Heart left ventricle (tissue), 16 donors: ENCODE measurements at regions of chr19 and their contacts with region 1.

Region 1: GRCh38 chr19:50357178-50358100 is 8.0 kb downstream of the NAPSA start:
- DNase-seq: peak; percentile 65 to 89 (median 76)
- ATAC-seq: peak; percentile 68 to 86 (median 75)
- H3K4me3 ChIP-seq: peak overlapping the region; percentile 14 to 71 (median 54)
- H3K27ac ChIP-seq: peak overlapping the region; percentile 37 to 92 (median 82)
- H3K4me1 ChIP-seq: peaks cover 0 to 13% (median 0%) of the 10 kb centered on the region in 12 donors
- H3K27me3 ChIP-seq: no peaks in the 10 kb centered on the region
- CTCF ChIP-seq: peak; percentile 82 to 94 (median 88)
- POLR2A ChIP-seq: no peak

Region 2: GRCh38 chr19:50203281-50204080 is 154.0 kb before region 1 on chr19 and contains the start of gene MYH14:
- intact Hi-C with region 1: no loop called
- DNase-seq: peak; percentile 87 to 94 (median 88)
- ATAC-seq: peak; percentile 91 to 93 (median 92)
- H3K4me3 ChIP-seq: peak within 1 kb of the TSS; percentile 24 to 86 (median 62)
- H3K27ac ChIP-seq: peak within 1 kb of the TSS; percentile 56 to 97 (median 84)
- H3K4me1 ChIP-seq: peaks cover 0 to 40% (median 16%) of the 10 kb centered on the region in 12 donors
- H3K27me3 ChIP-seq: peaks cover 0 to 47% (median 28%) of the 10 kb centered on the region in 9 donors
- CTCF ChIP-seq: peak in 2 of 12 donors; percentile 14 to 28
- POLR2A ChIP-seq: peak; percentile 65 to 72
- total RNA-seq, gene MYH14: 65.7 to 120 (median 90.5) TPM

Region 3: DNA sequence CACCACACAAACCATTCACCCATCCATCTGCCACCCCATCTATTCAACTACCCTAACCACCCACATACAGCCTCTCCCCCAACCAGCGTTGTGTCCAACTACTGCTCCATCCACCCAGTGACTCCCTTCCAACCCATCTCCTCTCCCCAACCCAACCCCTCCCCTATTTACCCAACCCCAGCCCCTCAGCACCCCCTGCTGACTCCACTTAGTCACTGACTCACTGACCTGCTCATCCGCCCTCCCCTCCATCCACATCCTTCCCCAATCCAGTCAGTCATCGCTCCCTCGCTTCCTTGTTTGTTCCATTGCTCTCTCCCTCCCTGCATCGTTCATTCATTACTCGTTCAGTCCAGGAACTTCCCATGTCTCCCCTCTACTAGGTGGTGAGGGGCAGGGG is 67.4 kb before region 1 on chr19:
- intact Hi-C with region 1: no loop called
- DNase-seq: no peak
- ATAC-seq: no peak
- H3K4me3 ChIP-seq: no peak overlapping the region
- H3K27ac ChIP-seq: no peak overlapping the region
- H3K4me1 ChIP-seq: no peaks in the 10 kb centered on the region
- H3K27me3 ChIP-seq: no peaks in the 10 kb centered on the region
- CTCF ChIP-seq: no peak
- POLR2A ChIP-seq: no peak

Region 4: GRCh38 chr19:50341091-50341564 is 16.3 kb before region 1 on chr19:
- intact Hi-C with region 1: no loop called
- DNase-seq: no peak
- ATAC-seq: peak in 1 of 4 donors; percentile 47
- H3K4me3 ChIP-seq: no peak overlapping the region
- H3K27ac ChIP-seq: no peak overlapping the region
- H3K4me1 ChIP-seq: peaks cover 0 to 28% (median 0%) of the 10 kb centered on the region in 12 donors
- H3K27me3 ChIP-seq: no peaks in the 10 kb centered on the region
- CTCF ChIP-seq: no peak
- POLR2A ChIP-seq: no peak

Region 5: DNA sequence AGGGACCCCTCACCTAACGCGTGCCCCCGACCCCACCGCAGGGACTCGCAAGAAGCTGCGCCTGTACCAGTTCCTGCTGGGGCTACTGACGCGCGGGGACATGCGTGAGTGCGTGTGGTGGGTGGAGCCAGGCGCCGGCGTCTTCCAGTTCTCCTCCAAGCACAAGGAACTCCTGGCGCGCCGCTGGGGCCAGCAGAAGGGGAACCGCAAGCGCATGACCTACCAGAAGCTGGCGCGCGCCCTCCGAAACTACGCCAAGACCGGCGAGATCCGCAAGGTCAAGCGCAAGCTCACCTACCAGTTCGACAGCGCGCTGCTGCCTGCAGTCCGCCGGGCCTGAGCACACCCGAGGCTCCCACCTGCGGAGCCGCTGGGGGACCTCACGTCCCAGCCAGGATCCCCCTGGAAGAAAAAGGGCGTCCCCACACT is 70.6 kb after region 1 on chr19:
- intact Hi-C with region 1: no loop called
- DNase-seq: peak; percentile 82 to 91 (median 86)
- ATAC-seq: peak; percentile 40 to 74 (median 68)
- H3K4me3 ChIP-seq: peak overlapping the region in 9 of 12 donors; percentile 7 to 47 (median 27)
- H3K27ac ChIP-seq: peak overlapping the region in 5 of 12 donors; percentile 30 to 88 (median 47)
- H3K4me1 ChIP-seq: peaks cover 0 to 30% (median 12%) of the 10 kb centered on the region in 12 donors
- H3K27me3 ChIP-seq: peaks cover 0 to 22% (median 10%) of the 10 kb centered on the region in 9 donors
- CTCF ChIP-seq: no peak
- POLR2A ChIP-seq: no peak

Region 6: GRCh38 chr19:50461066-50461875 is 103.8 kb after region 1 on chr19:
- intact Hi-C with region 1: loop called in 3 of 10 experiments (anchors 1 to 2 kb)
- DNase-seq: peak in 2 of 5 donors; percentile 38 to 54
- ATAC-seq: peak; percentile 62 to 90 (median 70)
- H3K4me3 ChIP-seq: no peak overlapping the region
- H3K27ac ChIP-seq: no peak overlapping the region
- H3K4me1 ChIP-seq: no peaks in the 10 kb centered on the region
- H3K27me3 ChIP-seq: peaks cover 3 to 50% (median 19%) of the 10 kb centered on the region in 9 donors
- CTCF ChIP-seq: peak; percentile 62 to 84 (median 78)
- POLR2A ChIP-seq: no peak

Region 7: DNA sequence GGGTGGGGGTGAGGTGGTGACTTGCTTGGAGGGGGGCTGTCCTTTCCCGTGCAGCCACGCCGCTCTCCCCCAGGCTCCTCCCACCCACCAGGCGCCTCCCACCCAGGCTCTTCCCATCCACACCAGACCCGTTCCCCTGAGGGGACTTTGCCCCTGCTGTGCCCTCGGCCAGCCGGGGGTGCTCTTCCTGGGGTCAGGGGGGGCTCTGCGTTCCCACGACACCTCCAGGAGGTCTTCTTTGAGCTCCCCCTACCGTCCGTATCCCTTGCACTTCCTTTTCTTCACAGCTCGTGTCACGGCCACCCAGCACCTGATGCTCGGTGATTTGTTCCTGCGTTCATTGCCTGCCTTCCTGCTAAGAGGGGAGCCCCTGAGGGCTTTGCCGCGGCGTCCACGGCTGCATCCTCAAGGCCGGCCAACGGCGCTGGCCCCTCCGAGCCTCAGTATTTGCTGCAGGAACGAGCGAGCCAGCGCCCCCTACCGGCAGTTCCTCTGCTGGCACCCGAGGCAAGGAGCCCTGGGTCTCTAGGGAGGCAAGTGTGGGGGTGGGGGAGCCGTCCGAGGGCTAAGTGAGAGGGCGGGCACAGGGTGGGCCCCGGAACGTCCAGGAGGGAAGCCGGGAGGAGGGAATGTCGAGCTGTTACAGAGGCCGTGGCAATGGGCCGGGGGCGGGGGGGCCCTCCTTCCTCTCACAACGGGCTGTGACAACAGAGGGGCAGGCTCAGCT is 199.0 kb after region 1 on chr19:
- intact Hi-C with region 1: loop called in 1 of 10 experiments (anchors 5 kb)
- DNase-seq: peak; percentile 64 to 90 (median 78)
- ATAC-seq: peak in 3 of 4 donors; percentile 69 to 83 (median 74)
- H3K4me3 ChIP-seq: peak overlapping the region in 11 of 12 donors; percentile 26 to 56 (median 50)
- H3K27ac ChIP-seq: peak overlapping the region in 1 of 12 donors; percentile 26
- H3K4me1 ChIP-seq: peaks cover 0 to 31% (median 6%) of the 10 kb centered on the region in 12 donors
- H3K27me3 ChIP-seq: peaks cover 0 to 55% (median 16%) of the 10 kb centered on the region in 9 donors
- CTCF ChIP-seq: peak; percentile 64 to 84 (median 74)
- POLR2A ChIP-seq: no peak

Region 8: DNA sequence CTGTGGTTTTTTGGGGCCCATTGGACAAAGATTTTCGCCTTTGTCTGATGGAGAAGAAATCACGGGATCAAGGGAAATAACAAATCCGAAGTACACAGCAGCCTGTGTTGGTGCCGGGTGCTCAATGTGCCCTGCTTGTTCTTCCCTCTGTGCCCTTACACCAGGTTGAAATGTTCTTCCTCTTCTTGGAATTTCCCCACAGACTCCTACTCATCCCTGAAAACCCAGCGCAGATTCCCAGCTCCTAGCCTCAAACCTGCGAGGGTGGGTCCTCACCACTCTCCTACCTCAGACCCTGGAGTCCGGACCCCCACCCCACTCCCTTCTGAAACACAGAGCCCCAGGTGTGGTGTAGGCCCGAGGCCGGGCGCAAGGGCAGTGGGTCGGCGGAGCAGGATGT is 427.9 kb after region 1 on chr19:
- intact Hi-C with region 1: loop called in 6 of 10 experiments (anchors 2 to 5 kb)
- DNase-seq: no peak
- ATAC-seq: no peak
- H3K4me3 ChIP-seq: no peak overlapping the region
- H3K27ac ChIP-seq: no peak overlapping the region
- H3K4me1 ChIP-seq: peaks cover 0 to 6% (median 0%) of the 10 kb centered on the region in 12 donors
- H3K27me3 ChIP-seq: peaks cover 9 to 31% (median 22%) of the 10 kb centered on the region in 9 donors
- CTCF ChIP-seq: no peak
- POLR2A ChIP-seq: no peak